ENCODE measurements at regions of chr5 and their contacts with region 1.

Region 1: GRCh38 chr5:62260510-62260909 is 45.5 kb upstream of the KIF2A start:
- DNase-seq: no peak
- ATAC-seq: no peak
- H3K4me3 ChIP-seq: no peak overlapping the region
- H3K27ac ChIP-seq: no peak overlapping the region
- H3K4me1 ChIP-seq: peaks cover 8 to 35% of the 10 kb centered on the region in 2 experiments; a peak in 4 of 5 replicates
- H3K27me3 ChIP-seq: no peaks in the 10 kb centered on the region
- CTCF ChIP-seq: no peak
- EP300 ChIP-seq: no peak
- POLR2A ChIP-seq: no peak
- RAD21 ChIP-seq: no peak

Region 2: DNA sequence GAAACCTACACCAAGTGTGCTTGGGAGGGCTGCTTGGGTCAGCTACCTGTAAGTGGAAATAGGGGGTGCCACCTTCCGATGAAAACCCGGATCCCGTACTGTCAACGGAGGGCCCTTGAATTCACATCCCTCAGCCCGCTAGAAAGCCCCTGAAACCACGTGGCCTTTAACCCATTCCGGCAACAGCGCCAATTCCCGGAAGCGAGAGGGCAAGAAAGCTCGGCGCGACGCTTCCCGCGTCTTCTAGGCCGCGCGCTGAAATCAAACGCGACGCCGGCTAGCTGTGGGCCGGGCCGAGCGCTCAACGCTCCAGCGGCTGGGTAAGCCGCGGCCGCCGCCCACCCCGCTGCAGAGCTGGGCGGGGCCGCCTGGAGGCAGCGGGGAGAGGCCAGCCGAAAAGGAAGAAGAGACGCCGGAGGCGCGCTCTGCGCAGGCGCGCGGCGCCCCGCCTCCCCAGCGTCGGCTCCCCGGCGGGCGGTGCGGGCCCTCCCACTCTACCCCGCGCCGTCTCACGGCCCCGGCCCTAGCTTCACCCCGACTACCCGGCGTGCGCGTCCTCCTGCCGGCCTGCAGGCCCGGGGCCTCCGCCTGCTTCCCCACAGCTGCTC is 45.3 kb after region 1 on chr5 and contains the start of gene KIF2A:
- CTCF ChIA-PET with region 1: no interaction called
- POLR2A ChIA-PET with region 1: interaction called, 3 read pairs
- in situ Hi-C with region 1: no loop called
- intact Hi-C with region 1: loop called (anchors 5 kb)
- DNase-seq: peak; percentile 96 to 97 (median 97)
- ATAC-seq: peak; percentile 95
- H3K4me3 ChIP-seq: peak within 1 kb of the TSS; percentile 97
- H3K27ac ChIP-seq: peak within 1 kb of the TSS; percentile 91
- H3K4me1 ChIP-seq: peaks cover 19 to 28% of the 10 kb centered on the region in 2 experiments; a peak in 4 of 5 replicates
- H3K27me3 ChIP-seq: no peaks in the 10 kb centered on the region
- CTCF ChIP-seq: peak in 2 of 3 experiments; percentile 10 to 19; a peak in 1 of 6 replicates
- EP300 ChIP-seq: peak; percentile 45
- POLR2A ChIP-seq: peak; percentile 64
- RAD21 ChIP-seq: peak in 1 of 2 experiments; percentile 28; a peak in 2 of 4 replicates
- polyA plus RNA-seq, gene KIF2A: 42.6 to 48.3 TPM